ENCODE measurements at regions of chr14 and their contacts with region 1.

Region 1: GRCh38 chr14:63543000-63543825 is at the start of gene PPP2R5E:
- DNase-seq: peak; percentile 97
- H3K4me3 Mint-ChIP-seq: peak within 1 kb of the TSS; percentile 97
- H3K27ac Mint-ChIP-seq: peak within 1 kb of the TSS; percentile 95
- H3K4me1 Mint-ChIP-seq: peaks cover 36% of the 10 kb centered on the region
- H3K27me3 Mint-ChIP-seq: peaks cover 2% of the 10 kb centered on the region
- total RNA-seq, gene PPP2R5E: 46.3 and 47.6 TPM in 2 replicates

Region 2: DNA sequence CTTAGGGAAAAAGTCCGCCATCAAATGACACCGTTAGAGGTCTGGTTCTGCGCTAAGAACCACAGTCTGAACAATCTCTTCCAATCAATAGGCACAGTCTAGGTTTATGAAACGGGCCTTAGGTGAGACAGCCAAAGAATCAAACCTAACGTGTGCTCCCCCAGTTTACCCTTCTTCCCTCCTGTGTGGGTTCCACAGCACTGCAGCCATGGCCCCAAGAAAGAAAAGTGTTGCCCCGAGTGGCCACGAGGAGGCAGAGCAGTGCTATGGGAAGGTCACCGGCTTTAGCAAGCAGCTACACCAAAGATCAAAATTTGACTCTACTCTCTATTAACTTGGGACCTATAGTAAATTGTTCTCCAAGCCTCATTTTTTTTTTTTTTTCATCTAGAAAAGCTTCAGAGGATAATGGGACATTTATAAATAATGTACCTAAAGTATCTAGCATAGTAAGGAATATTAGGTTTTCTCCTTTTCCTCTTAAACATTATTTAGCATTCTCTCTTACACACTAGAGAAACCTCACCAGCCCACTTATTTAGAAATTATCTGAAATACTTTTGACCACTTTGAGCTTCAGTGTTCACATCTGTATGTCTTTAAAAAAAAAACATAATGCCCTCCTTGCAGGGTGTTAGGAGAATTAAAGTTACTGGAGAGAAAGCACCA is 154.3 kb before region 1 on chr14:
- intact Hi-C with region 1: loop called (anchors 1 kb)
- DNase-seq: peak; percentile 35
- H3K4me3 Mint-ChIP-seq: no peak overlapping the region
- H3K27ac Mint-ChIP-seq: no peak overlapping the region
- H3K4me1 Mint-ChIP-seq: peaks cover 8% of the 10 kb centered on the region
- H3K27me3 Mint-ChIP-seq: no peaks in the 10 kb centered on the region

Region 3: DNA sequence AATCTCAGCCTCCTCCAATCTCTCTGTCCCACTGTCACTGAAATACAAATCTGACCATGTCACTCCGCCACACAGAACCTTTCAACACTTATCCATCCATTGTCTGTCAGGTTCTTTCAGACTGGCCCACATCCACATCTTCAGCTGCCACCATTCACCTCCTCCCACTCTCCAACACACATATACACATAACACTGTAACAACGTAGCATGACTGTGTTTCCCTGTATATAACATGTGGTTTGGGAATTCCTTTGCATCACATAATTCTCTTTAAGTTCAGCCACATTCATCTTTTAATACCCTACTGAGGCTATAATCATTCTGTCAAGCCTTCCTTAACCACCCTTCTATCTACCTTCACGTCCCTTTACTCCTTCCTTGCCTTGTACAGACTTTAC is 99.2 kb before region 1 on chr14:
- intact Hi-C with region 1: no loop called
- DNase-seq: no peak
- H3K4me3 Mint-ChIP-seq: no peak overlapping the region
- H3K27ac Mint-ChIP-seq: no peak overlapping the region
- H3K4me1 Mint-ChIP-seq: peaks cover 11% of the 10 kb centered on the region
- H3K27me3 Mint-ChIP-seq: no peaks in the 10 kb centered on the region

Region 4: DNA sequence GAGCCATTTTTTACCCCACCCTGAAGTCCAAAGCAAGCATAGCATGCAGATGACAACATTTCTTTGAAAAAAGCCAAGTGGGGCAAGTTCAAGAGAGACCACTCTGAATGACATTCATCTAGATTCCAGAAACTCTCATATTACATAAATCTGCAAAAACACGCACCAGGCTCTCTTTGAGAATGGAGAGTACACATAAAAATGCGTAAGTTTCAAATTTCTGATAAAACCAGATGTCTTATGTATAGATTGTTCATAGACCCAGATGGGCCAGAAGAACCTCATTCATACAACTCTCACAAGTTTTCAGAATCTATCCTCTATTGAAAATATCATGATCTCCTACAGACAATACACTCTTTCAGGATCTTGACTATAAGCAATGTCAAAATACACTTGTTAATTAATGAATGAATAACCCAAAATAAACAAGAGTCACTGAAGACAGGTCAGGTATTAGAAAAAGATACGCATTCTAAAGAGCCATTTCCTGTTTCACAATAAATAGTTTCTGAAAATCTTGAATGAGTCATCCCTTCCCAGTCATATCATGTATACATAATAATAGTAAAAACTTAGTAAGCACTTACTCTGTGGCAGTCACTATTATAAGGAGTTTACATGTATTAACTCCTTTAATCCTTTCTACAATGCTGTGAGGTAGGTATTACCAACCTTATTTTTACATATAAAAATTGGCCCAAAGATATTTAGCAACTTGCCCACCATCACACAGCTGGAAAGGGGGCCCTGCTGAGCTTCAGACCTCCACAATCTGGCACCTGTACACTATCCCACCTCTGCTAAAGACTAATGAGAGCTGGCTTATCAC is 72.0 kb before region 1 on chr14:
- intact Hi-C with region 1: loop called (anchors 2 kb)
- DNase-seq: no peak
- H3K4me3 Mint-ChIP-seq: peak overlapping the region; percentile 46
- H3K27ac Mint-ChIP-seq: peak overlapping the region; percentile 40
- H3K4me1 Mint-ChIP-seq: peaks cover 46% of the 10 kb centered on the region
- H3K27me3 Mint-ChIP-seq: no peaks in the 10 kb centered on the region

Region 5: DNA sequence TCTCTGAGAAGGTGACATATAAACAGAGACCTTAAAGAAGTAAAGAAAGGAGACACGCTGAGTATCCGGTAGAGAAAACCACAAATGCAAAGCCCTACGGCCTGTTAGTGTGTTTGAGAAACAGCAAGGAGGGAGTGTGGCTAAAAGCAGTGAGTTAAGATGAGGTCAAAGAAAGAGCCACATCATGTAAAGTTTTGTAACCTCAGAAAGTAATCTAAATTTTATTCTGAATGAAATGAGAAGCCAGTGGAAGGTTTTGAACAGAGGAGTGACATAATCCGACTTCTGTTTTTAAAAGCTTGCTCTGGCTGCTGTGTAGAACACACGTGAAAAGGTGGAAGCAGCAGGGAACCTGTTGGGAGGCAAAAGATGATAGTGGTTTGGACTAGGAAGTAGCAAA is 32.7 kb before region 1 on chr14:
- intact Hi-C with region 1: loop called (anchors 1 kb)
- DNase-seq: peak; percentile 14
- H3K4me3 Mint-ChIP-seq: peak overlapping the region; percentile 32
- H3K27ac Mint-ChIP-seq: peak overlapping the region; percentile 87
- H3K4me1 Mint-ChIP-seq: peaks cover 63% of the 10 kb centered on the region
- H3K27me3 Mint-ChIP-seq: no peaks in the 10 kb centered on the region

Region 6: GRCh38 chr14:63727774-63728728 is 184.8 kb after region 1 on chr14 and contains the start of gene SGPP1:
- intact Hi-C with region 1: loop called (anchors 2 kb)
- DNase-seq: peak; percentile 81
- H3K4me3 Mint-ChIP-seq: peak within 1 kb of the TSS; percentile 99
- H3K27ac Mint-ChIP-seq: peak within 1 kb of the TSS; percentile 99
- H3K4me1 Mint-ChIP-seq: peaks cover 33% of the 10 kb centered on the region
- H3K27me3 Mint-ChIP-seq: peaks cover 16% of the 10 kb centered on the region
- total RNA-seq, gene SGPP1: 14.7 and 14.8 TPM in 2 replicates

Region 7: GRCh38 chr14:63852817-63853731 is 309.9 kb after region 1 on chr14 and contains the start of gene SYNE2:
- intact Hi-C with region 1: loop called (anchors 5 kb)
- DNase-seq: peak; percentile 81
- H3K4me3 Mint-ChIP-seq: peak within 1 kb of the TSS; percentile 97
- H3K27ac Mint-ChIP-seq: peak within 1 kb of the TSS; percentile 97
- H3K4me1 Mint-ChIP-seq: peaks cover 43% of the 10 kb centered on the region
- H3K27me3 Mint-ChIP-seq: peaks cover 4% of the 10 kb centered on the region
- total RNA-seq, gene SYNE2: 25.1 and 26.9 TPM in 2 replicates

Region 8: DNA sequence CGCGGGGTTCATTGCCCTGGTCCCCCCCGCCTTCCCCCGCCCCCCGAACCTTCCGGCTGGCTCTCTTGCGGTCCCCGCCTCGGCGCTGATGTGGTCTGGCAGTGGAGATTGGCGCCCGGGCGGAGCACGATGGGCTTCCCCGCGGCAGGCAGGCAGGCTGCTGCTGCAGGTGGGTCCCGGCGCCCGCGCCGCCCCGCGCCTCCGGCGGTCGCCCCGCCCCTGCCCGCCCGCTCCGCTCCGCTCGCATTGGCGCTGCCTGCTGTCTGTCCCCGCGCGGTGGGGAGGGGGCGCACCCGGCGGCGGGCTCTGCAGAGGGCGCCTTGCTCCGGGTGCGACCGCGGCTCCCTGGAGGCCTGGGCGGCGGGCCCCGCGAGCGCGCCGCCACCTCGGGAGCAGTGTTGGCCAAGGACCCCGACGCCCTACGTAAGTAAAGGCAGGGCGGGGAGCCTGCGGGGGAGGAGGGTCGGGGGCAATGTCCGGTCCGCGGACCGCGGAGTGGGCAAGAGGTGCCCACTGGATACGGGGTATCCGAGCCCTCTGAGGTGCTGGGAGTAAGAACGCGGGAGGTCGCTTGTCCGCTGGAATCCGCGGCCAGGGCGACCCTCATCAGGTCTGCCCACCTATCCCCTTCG is 922.1 kb after region 1 on chr14 and contains the start of gene AKAP5:
- intact Hi-C with region 1: loop called (anchors 5 kb)
- DNase-seq: peak; percentile 62
- H3K4me3 Mint-ChIP-seq: peak within 1 kb of the TSS; percentile 88
- H3K27ac Mint-ChIP-seq: peak within 1 kb of the TSS; percentile 88
- H3K4me1 Mint-ChIP-seq: peaks cover 35% of the 10 kb centered on the region
- H3K27me3 Mint-ChIP-seq: peaks cover 6% of the 10 kb centered on the region
- total RNA-seq, gene AKAP5: 1.1 and 1.5 TPM in 2 replicates